ENCODE measurements at regions of chr17 and their contacts with region 1.

Region 1: DNA sequence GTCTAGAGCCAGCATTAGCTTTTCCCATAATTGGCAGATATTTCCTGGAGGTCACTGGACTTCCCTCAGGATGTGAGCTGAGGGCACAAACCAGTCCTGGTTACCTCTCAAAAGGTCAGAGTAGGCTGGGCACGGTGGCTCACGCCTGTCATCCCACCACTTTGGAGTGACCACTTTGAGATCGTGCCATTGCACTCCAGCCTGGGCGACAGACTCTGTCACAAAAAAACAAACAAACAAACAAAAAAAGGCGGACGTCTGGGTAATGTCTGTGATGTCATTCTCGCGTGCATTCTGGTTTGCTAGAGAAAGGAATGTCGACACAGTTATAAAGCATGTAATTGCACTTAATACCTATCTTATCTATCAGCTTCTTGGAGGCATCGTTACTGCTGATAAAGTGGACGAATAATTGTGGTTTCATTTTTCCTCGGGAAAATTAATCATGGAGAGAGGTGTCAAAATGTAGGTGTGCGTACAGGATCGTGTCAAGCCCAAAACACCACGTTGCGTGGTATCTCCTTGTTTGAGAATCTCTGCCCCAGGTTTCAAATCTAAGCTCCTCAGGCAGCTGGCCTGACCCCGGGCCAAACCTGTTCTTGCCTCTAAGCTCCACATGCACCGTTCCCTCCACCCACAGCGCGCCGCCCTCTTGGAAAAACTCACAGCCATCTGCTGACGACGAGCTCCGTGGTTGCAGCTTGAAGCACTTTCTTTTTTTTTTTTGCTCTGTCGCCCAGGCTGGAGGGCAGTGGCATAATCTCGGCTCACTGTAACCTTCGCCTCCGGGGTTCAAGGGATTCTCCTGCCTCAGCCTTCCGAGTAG is 6.5 kb upstream of the CRK start:
- DNase-seq: no peak
- H3K4me3 Mint-ChIP-seq: peak overlapping the region; percentile 57
- H3K27ac Mint-ChIP-seq: peak overlapping the region; percentile 92
- H3K4me1 Mint-ChIP-seq: peaks cover 16% of the 10 kb centered on the region
- H3K27me3 Mint-ChIP-seq: peaks cover 26% of the 10 kb centered on the region

Region 2: GRCh38 chr17:1438593-1439083 is 23.9 kb before region 1 on chr17:
- intact Hi-C with region 1: no loop called
- DNase-seq: no peak
- H3K4me3 Mint-ChIP-seq: no peak overlapping the region
- H3K27ac Mint-ChIP-seq: no peak overlapping the region
- H3K4me1 Mint-ChIP-seq: peaks cover 2% of the 10 kb centered on the region
- H3K27me3 Mint-ChIP-seq: no peaks in the 10 kb centered on the region

Region 3: GRCh38 chr17:1484676-1485421 is 22.3 kb after region 1 on chr17:
- intact Hi-C with region 1: loop called (anchors 2 kb)
- DNase-seq: peak; percentile 84
- H3K4me3 Mint-ChIP-seq: peak overlapping the region; percentile 82
- H3K27ac Mint-ChIP-seq: peak overlapping the region; percentile 82
- H3K4me1 Mint-ChIP-seq: peaks cover 20% of the 10 kb centered on the region
- H3K27me3 Mint-ChIP-seq: no peaks in the 10 kb centered on the region

Measured in activated CD4-positive, alpha-beta T cell treated with anti-CD3 and anti-CD28 coated beads, Interleukin-2, amount 10 ng/mL, durations not matched to agents 24 days and 14 days (primary cell).